Breast epithelium (tissue), 4 donors: ENCODE measurements at regions of chr11 and their contacts with region 1.

Region 1: GRCh38 chr11:72821883-72822799 is 7.9 kb downstream of the ATG16L2 start:
- DNase-seq: peak; percentile 72 to 86
- H3K4me3 ChIP-seq: peak overlapping the region; percentile 35 to 80 (median 57)
- H3K27ac ChIP-seq: peak overlapping the region; percentile 60 to 71
- H3K4me1 ChIP-seq: peaks cover 4 to 8% of the 10 kb centered on the region in 2 donors
- H3K27me3 ChIP-seq: no peaks in the 10 kb centered on the region
- CTCF ChIP-seq: peak in 1 of 3 donors; percentile 13
- POLR2A ChIP-seq: no peak

Region 2: GRCh38 chr11:73177778-73178577 is 355.8 kb after region 1 on chr11:
- intact Hi-C with region 1: loop called (anchors 2 kb)
- DNase-seq: peak; percentile 80
- H3K4me3 ChIP-seq: peak overlapping the region in 1 of 3 donors; percentile 21
- H3K27ac ChIP-seq: peak overlapping the region; percentile 68 to 77
- H3K4me1 ChIP-seq: no peaks in the 10 kb centered on the region
- H3K27me3 ChIP-seq: no peaks in the 10 kb centered on the region
- CTCF ChIP-seq: peak; percentile 55 to 92 (median 79)
- POLR2A ChIP-seq: no peak